AG04449 (cell line): ENCODE measurements at regions of chr12 and their contacts with region 1.

Region 1: GRCh38 chr12:108570743-108571608 is 8.6 kb downstream of the ISCU start:
- DNase-seq: no peak
- H3K4me3 ChIP-seq: no peak overlapping the region
- CTCF ChIP-seq: peak; percentile 37

Region 2: GRCh38 chr12:108589028-108589839 is 18.3 kb after region 1 on chr12:
- CTCF ChIA-PET with region 1: interaction called, 11 read pairs
- POLR2A ChIA-PET with region 1: no interaction called
- DNase-seq: no peak
- H3K4me3 ChIP-seq: no peak overlapping the region
- CTCF ChIP-seq: no peak

Region 3: GRCh38 chr12:108633534-108634248 is 62.7 kb after region 1 on chr12 and contains the start of gene SELPLG:
- CTCF ChIA-PET with region 1: interaction called, 39 read pairs
- POLR2A ChIA-PET with region 1: no interaction called
- DNase-seq: no peak
- H3K4me3 ChIP-seq: no peak within 1 kb of the TSS
- CTCF ChIP-seq: no peak

Region 4: DNA sequence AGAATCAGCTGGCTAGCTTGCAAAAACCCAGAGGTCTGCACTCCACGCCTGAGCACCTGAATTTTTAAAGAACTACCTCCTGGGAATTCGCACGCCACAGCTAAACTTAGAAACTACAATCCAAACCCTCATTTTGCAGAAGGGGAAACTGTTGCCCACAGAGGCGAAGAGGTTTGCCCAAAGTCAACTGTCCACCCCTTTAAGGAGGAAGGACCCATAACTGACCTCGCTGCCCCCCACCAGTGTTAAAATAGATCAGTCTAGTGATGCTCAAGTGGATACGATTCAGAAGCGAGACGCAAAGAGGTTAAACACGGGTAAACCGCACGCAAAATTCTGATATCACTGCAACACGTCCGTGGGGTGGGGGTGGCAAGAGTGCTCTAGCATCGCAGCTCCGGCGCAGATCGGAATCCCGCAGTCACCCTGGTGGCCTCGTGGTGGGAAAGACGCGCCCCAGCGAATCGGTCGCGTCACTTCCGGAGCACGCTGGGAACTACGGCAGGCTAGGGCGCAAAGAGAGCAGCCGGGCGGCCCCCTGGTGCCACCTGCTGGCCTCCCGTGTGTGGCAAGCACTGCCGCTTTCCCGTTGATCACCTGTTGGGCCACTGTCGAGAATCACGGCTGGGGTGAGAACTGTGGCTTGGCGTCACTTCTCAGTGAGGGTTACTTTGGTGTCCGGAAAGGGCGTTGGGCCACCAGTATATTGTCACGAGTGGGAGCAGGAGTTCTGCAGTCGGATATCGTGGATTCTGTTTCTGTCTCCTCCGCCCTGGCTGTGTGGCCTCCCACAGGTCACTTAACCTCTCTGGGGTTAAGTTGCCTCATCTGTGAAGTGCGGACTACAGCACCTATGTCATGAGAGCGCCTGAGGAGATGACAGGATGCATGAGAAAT is 522.3 kb after region 1 on chr12 and contains the start of gene ALKBH2:
- CTCF ChIA-PET with region 1: interaction called, 18 read pairs
- POLR2A ChIA-PET with region 1: no interaction called
- DNase-seq: peak; percentile 34
- H3K4me3 ChIP-seq: peak within 1 kb of the TSS; percentile 78
- CTCF ChIP-seq: peak; percentile 99